ENCODE measurements at regions of chr4 and their contacts with region 1.

Region 1: DNA sequence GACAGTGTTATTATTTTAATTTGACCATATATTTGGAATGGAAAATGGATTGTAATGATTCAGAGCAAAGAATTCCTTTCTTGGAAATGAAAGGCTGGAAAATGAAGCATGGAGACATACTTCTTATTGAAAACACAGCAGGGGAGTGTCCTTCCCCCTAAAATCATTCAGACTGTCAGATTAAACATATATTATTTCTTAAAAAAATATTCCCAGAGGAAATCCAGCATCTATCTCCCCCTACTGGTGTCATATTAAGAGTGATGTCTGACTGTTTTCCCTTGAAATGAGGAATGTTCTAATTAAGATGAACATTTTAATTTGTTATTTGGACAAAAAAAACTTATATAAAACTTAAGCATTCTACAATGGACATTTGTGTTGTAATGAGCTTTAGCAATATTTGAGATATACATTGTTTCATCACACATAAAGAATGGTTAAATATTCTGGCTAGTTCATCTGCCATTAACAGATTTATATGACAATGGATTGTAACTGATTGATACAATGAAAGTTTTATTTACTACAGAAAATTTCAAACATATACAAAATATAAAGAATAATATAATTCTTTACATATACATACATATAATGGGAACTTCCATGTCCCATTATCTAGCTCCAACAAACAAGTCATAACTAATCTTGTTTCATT is 264.6 kb downstream of the SPRY1 start:
- DNase-seq: no peak
- H3K4me3 Mint-ChIP-seq: no peak overlapping the region
- H3K27ac Mint-ChIP-seq: no peak overlapping the region
- H3K4me1 Mint-ChIP-seq: peaks cover 10% of the 10 kb centered on the region
- H3K27me3 Mint-ChIP-seq: peaks cover 27% of the 10 kb centered on the region

Region 2: GRCh38 chr4:123338715-123339114 is 322.5 kb before region 1 on chr4:
- intact Hi-C with region 1: no loop called
- DNase-seq: no peak
- H3K4me3 Mint-ChIP-seq: no peak overlapping the region
- H3K27ac Mint-ChIP-seq: no peak overlapping the region
- H3K4me1 Mint-ChIP-seq: no peaks in the 10 kb centered on the region
- H3K27me3 Mint-ChIP-seq: peaks cover 10% of the 10 kb centered on the region

Region 3: GRCh38 chr4:123390846-123391456 is 270.3 kb before region 1 on chr4:
- intact Hi-C with region 1: loop called (anchors 1 kb)
- DNase-seq: no peak
- H3K4me3 Mint-ChIP-seq: no peak overlapping the region
- H3K27ac Mint-ChIP-seq: no peak overlapping the region
- H3K4me1 Mint-ChIP-seq: peaks cover 6% of the 10 kb centered on the region
- H3K27me3 Mint-ChIP-seq: peaks cover 24% of the 10 kb centered on the region

Region 4: GRCh38 chr4:123564758-123565346 is 96.4 kb before region 1 on chr4:
- intact Hi-C with region 1: loop called (anchors 2 kb)
- DNase-seq: peak; percentile 87
- H3K4me3 Mint-ChIP-seq: no peak overlapping the region
- H3K27ac Mint-ChIP-seq: no peak overlapping the region
- H3K4me1 Mint-ChIP-seq: peaks cover 8% of the 10 kb centered on the region
- H3K27me3 Mint-ChIP-seq: peaks cover 22% of the 10 kb centered on the region

Region 5: GRCh38 chr4:123706973-123707372 is 45.8 kb after region 1 on chr4:
- intact Hi-C with region 1: no loop called
- DNase-seq: no peak
- H3K4me3 Mint-ChIP-seq: no peak overlapping the region
- H3K27ac Mint-ChIP-seq: no peak overlapping the region
- H3K4me1 Mint-ChIP-seq: no peaks in the 10 kb centered on the region
- H3K27me3 Mint-ChIP-seq: peaks cover 2% of the 10 kb centered on the region

Region 6: DNA sequence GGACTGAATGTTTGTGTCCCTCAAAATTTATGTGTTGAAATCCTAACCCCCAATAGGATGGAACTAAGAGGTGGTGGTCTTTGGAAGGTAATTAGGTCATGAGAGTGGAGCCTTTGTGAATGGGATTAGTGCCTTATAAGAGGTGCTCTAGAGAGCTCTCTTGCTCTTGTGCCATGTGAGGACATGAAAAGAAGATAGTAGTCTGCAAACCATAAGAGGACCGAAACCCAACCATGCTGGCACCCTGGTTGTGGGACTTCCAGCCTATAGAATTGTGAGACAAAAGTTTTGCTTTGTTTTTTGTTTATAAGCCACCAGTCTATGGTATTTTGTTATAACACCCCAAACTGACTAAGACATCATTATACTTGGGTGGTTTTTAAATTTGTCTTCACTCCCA is 634.2 kb after region 1 on chr4:
- intact Hi-C with region 1: no loop called
- DNase-seq: no peak
- H3K4me3 Mint-ChIP-seq: no peak overlapping the region
- H3K27ac Mint-ChIP-seq: no peak overlapping the region
- H3K4me1 Mint-ChIP-seq: no peaks in the 10 kb centered on the region
- H3K27me3 Mint-ChIP-seq: no peaks in the 10 kb centered on the region

Measured in activated CD4-positive, alpha-beta T cell treated with anti-CD3 and anti-CD28 coated beads, Interleukin-2, amount 10 ng/mL, durations not matched to agents 24 days and 14 days (primary cell).